Endothelial cell of umbilical vein (primary cell): ENCODE measurements at regions of chr4 and their contacts with region 1.

Region 1: GRCh38 chr4:85798012-85798770 is 323.2 kb downstream of the ARHGAP24 start:
- DNase-seq: no peak
- H3K4me3 ChIP-seq: no peak overlapping the region
- H3K27ac ChIP-seq: no peak overlapping the region
- H3K4me1 ChIP-seq: peaks cover 27% of the 10 kb centered on the region
- H3K27me3 ChIP-seq: no peaks in the 10 kb centered on the region
- CTCF ChIP-seq: no peak
- POLR2A ChIP-seq: no peak

Region 2: GRCh38 chr4:85268961-85269360 is 529.2 kb before region 1 on chr4:
- CTCF ChIA-PET with region 1: no interaction called
- POLR2A ChIA-PET with region 1: no interaction called
- dilution Hi-C with region 1: no loop called
- intact Hi-C with region 1: no loop called
- DNase-seq: no peak
- H3K4me3 ChIP-seq: no peak overlapping the region
- H3K27ac ChIP-seq: no peak overlapping the region
- H3K4me1 ChIP-seq: no peaks in the 10 kb centered on the region
- H3K27me3 ChIP-seq: peaks cover 0 to 5% of the 10 kb centered on the region in 2 experiments
- CTCF ChIP-seq: no peak
- POLR2A ChIP-seq: no peak

Region 3: DNA sequence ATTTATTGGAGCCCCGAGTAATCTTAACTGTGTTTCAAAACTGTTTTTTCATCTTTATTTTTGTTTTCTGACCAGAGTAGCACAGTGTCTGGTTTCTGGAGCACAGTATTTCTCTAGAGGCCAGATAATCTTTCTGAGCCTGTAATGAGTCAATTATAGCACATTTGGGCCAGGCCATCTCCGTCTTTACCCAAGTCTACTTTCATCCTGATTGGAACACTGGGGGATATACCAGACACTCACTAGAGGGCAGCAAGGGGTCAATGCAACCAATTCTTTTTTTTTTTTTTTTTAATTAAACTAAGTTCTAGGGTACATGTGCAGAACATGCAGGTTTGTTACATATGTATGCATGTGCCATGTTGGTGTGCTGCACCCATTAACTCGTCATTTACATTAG is 41.3 kb before region 1 on chr4:
- CTCF ChIA-PET with region 1: interaction called, 59 read pairs
- POLR2A ChIA-PET with region 1: no interaction called
- dilution Hi-C with region 1: no loop called
- intact Hi-C with region 1: loop called (anchors 1 kb)
- DNase-seq: peak; percentile 68
- H3K4me3 ChIP-seq: no peak overlapping the region
- H3K27ac ChIP-seq: no peak overlapping the region
- H3K4me1 ChIP-seq: peaks cover 22% of the 10 kb centered on the region
- H3K27me3 ChIP-seq: no peaks in the 10 kb centered on the region
- CTCF ChIP-seq: peak; percentile 38 to 57
- POLR2A ChIP-seq: no peak

Region 4: GRCh38 chr4:85787138-85787537 is 11.1 kb before region 1 on chr4:
- CTCF ChIA-PET with region 1: interaction called, 129 read pairs
- POLR2A ChIA-PET with region 1: no interaction called
- dilution Hi-C with region 1: no loop called
- intact Hi-C with region 1: no loop called
- DNase-seq: peak; percentile 81
- H3K4me3 ChIP-seq: no peak overlapping the region
- H3K27ac ChIP-seq: peak overlapping the region; percentile 67
- H3K4me1 ChIP-seq: peaks cover 98% of the 10 kb centered on the region
- H3K27me3 ChIP-seq: no peaks in the 10 kb centered on the region
- CTCF ChIP-seq: no peak
- POLR2A ChIP-seq: no peak

Region 5: GRCh38 chr4:85842540-85842939 is 44.3 kb after region 1 on chr4:
- CTCF ChIA-PET with region 1: interaction called, 14 read pairs
- POLR2A ChIA-PET with region 1: no interaction called
- dilution Hi-C with region 1: no loop called
- intact Hi-C with region 1: no loop called
- DNase-seq: peak; percentile 96
- H3K4me3 ChIP-seq: peak overlapping the region in 1 of 3 experiments; percentile 29
- H3K27ac ChIP-seq: peak overlapping the region; percentile 95
- H3K4me1 ChIP-seq: peaks cover 24% of the 10 kb centered on the region
- H3K27me3 ChIP-seq: no peaks in the 10 kb centered on the region
- CTCF ChIP-seq: no peak
- POLR2A ChIP-seq: no peak

Region 6: GRCh38 chr4:85953651-85954018 is 155.4 kb after region 1 on chr4:
- CTCF ChIA-PET with region 1: interaction called, 12 read pairs
- POLR2A ChIA-PET with region 1: no interaction called
- dilution Hi-C with region 1: no loop called
- intact Hi-C with region 1: no loop called
- DNase-seq: peak; percentile 63
- H3K4me3 ChIP-seq: no peak overlapping the region
- H3K27ac ChIP-seq: peak overlapping the region; percentile 64
- H3K4me1 ChIP-seq: peaks cover 26% of the 10 kb centered on the region
- H3K27me3 ChIP-seq: no peaks in the 10 kb centered on the region
- CTCF ChIP-seq: no peak
- POLR2A ChIP-seq: no peak

Region 7: GRCh38 chr4:85986266-85986665 is 188.1 kb after region 1 on chr4:
- CTCF ChIA-PET with region 1: interaction called, 10 read pairs
- POLR2A ChIA-PET with region 1: no interaction called
- dilution Hi-C with region 1: no loop called
- intact Hi-C with region 1: no loop called
- DNase-seq: no peak
- H3K4me3 ChIP-seq: no peak overlapping the region
- H3K27ac ChIP-seq: no peak overlapping the region
- H3K4me1 ChIP-seq: no peaks in the 10 kb centered on the region
- H3K27me3 ChIP-seq: no peaks in the 10 kb centered on the region
- CTCF ChIP-seq: no peak
- POLR2A ChIP-seq: no peak

Region 8: GRCh38 chr4:86271057-86271456 is 472.9 kb after region 1 on chr4:
- CTCF ChIA-PET with region 1: no interaction called
- POLR2A ChIA-PET with region 1: no interaction called
- dilution Hi-C with region 1: no loop called
- intact Hi-C with region 1: no loop called
- DNase-seq: no peak
- H3K4me3 ChIP-seq: no peak overlapping the region
- H3K27ac ChIP-seq: no peak overlapping the region
- H3K4me1 ChIP-seq: no peaks in the 10 kb centered on the region
- H3K27me3 ChIP-seq: no peaks in the 10 kb centered on the region
- CTCF ChIP-seq: no peak
- POLR2A ChIP-seq: no peak